ENCODE measurements at regions of chr15 and their contacts with region 1.

Region 1: GRCh38 chr15:80776420-80777045 is 2.6 kb upstream of the CEMIP start:
- DNase-seq: peak; percentile 75
- ATAC-seq: no peak
- H3K4me3 Mint-ChIP-seq: no peak overlapping the region
- H3K27ac Mint-ChIP-seq: no peak overlapping the region
- H3K4me1 Mint-ChIP-seq: peaks cover 11% of the 10 kb centered on the region
- H3K27me3 Mint-ChIP-seq: peaks cover 39% of the 10 kb centered on the region
- CTCF ChIP-seq: peak; percentile 83

Region 2: GRCh38 chr15:80384432-80384831 is 392.1 kb before region 1 on chr15:
- CTCF ChIA-PET with region 1: no interaction called
- POLR2A ChIA-PET with region 1: no interaction called
- DNase-seq: no peak
- ATAC-seq: no peak
- H3K4me3 Mint-ChIP-seq: no peak overlapping the region
- H3K27ac Mint-ChIP-seq: no peak overlapping the region
- H3K4me1 Mint-ChIP-seq: peaks cover 27% of the 10 kb centered on the region
- H3K27me3 Mint-ChIP-seq: no peaks in the 10 kb centered on the region
- CTCF ChIP-seq: no peak

Region 3: DNA sequence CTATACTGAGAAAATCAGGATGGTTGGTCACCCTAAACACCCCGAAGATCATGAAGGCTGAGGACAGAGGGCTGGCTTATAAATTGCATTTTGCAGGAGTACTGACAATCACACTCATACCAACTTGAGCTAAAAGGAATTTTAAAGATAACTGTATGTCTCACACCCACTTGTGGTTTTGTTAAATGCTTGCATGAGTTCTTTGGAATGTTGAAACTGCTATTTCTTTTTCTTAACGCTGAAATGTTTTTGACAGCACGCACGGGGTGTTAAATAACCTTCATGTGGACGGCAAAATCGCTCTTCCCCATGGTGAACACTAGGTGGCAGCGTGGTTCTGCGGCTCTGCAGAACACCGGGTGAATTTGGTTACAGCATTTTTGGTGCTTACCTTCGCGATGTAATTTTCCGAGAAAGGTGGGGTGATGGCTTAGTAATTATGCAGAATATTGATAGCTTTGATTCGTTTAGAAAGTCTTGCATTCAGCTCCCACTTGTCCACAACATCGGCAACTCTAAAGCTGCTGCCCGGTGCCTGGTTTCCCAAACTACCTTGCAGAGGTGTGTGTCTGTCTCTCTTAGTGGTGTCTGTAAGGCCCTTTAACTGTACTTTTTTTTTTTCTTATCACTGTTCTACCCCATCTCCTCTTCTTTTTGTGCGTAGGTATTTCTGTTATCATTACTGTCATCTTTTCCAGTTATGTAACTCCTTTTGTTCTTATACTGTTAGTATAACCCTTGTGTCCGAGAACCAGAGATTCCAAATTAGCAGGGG is 320.7 kb before region 1 on chr15:
- CTCF ChIA-PET with region 1: interaction called, 47 read pairs
- POLR2A ChIA-PET with region 1: no interaction called
- DNase-seq: peak; percentile 40
- ATAC-seq: peak; percentile 74
- H3K4me3 Mint-ChIP-seq: no peak overlapping the region
- H3K27ac Mint-ChIP-seq: no peak overlapping the region
- H3K4me1 Mint-ChIP-seq: peaks cover 33% of the 10 kb centered on the region
- H3K27me3 Mint-ChIP-seq: no peaks in the 10 kb centered on the region; the same call in 1 of the 2 replicates
- CTCF ChIP-seq: peak; percentile 86

Region 4: DNA sequence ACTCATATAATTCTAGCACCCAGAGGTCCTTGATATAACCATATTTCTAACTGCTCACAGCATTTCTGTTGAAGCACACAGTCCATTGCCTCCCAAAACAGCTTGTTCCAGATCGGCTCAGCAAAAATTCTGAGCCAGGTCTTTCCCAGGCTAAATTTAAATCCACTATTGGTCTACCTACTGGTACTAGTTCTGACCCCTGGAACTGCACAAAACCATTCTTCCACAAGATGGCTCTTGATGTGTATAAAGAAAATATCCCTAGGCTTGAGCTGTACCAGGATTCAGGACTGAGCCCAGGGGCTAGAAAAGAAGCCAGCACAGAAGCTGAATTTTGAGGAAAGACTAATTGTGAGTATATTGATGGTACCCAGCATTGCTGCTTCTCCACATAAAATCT is 156.9 kb before region 1 on chr15:
- CTCF ChIA-PET with region 1: interaction called, 12 read pairs
- POLR2A ChIA-PET with region 1: no interaction called
- DNase-seq: no peak
- ATAC-seq: no peak
- H3K4me3 Mint-ChIP-seq: no peak overlapping the region
- H3K27ac Mint-ChIP-seq: no peak overlapping the region
- H3K4me1 Mint-ChIP-seq: no peaks in the 10 kb centered on the region
- H3K27me3 Mint-ChIP-seq: no peaks in the 10 kb centered on the region; the same call in 1 of the 2 replicates
- CTCF ChIP-seq: no peak

Region 5: GRCh38 chr15:80674245-80674614 is 102.3 kb before region 1 on chr15:
- CTCF ChIA-PET with region 1: interaction called, 21 read pairs
- POLR2A ChIA-PET with region 1: no interaction called
- DNase-seq: no peak
- ATAC-seq: no peak
- H3K4me3 Mint-ChIP-seq: no peak overlapping the region
- H3K27ac Mint-ChIP-seq: no peak overlapping the region
- H3K4me1 Mint-ChIP-seq: peaks cover 3% of the 10 kb centered on the region; the same call in 1 of the 2 replicates
- H3K27me3 Mint-ChIP-seq: peaks cover 6% of the 10 kb centered on the region; the same call in 1 of the 2 replicates
- CTCF ChIP-seq: no peak

Region 6: GRCh38 chr15:80804965-80805495 is 28.5 kb after region 1 on chr15:
- CTCF ChIA-PET with region 1: interaction called, 11 read pairs
- POLR2A ChIA-PET with region 1: no interaction called
- DNase-seq: no peak
- ATAC-seq: peak; percentile 57
- H3K4me3 Mint-ChIP-seq: no peak overlapping the region
- H3K27ac Mint-ChIP-seq: no peak overlapping the region
- H3K4me1 Mint-ChIP-seq: peaks cover 15% of the 10 kb centered on the region
- H3K27me3 Mint-ChIP-seq: peaks cover 15% of the 10 kb centered on the region
- CTCF ChIP-seq: no peak

Region 7: GRCh38 chr15:80887148-80887547 is 110.6 kb after region 1 on chr15:
- CTCF ChIA-PET with region 1: interaction called, 15 read pairs
- POLR2A ChIA-PET with region 1: no interaction called
- DNase-seq: no peak
- ATAC-seq: peak; percentile 47
- H3K4me3 Mint-ChIP-seq: no peak overlapping the region
- H3K27ac Mint-ChIP-seq: no peak overlapping the region
- H3K4me1 Mint-ChIP-seq: peaks cover 25% of the 10 kb centered on the region
- H3K27me3 Mint-ChIP-seq: peaks cover 3% of the 10 kb centered on the region; the same call in 1 of the 2 replicates
- CTCF ChIP-seq: no peak

Region 8: DNA sequence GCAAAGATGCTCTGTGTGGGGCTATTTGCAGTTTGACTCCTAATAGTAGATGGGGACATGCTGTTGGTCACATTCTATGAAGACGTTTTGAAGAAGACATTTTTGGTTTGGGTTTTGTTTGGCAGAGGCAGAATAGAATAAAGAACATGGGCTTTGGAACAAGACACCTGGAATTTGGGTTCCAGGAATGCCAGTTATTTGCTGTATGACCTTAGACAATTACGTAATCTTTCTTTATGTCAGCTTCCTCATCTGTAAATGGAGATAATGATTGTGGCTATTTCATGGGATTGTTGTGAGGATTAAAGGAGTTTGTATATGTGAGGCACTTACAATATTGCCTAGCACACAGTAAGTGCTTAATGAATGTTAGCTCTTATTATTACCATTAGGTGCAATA is 121.5 kb after region 1 on chr15:
- CTCF ChIA-PET with region 1: no interaction called
- POLR2A ChIA-PET with region 1: no interaction called
- DNase-seq: no peak
- ATAC-seq: no peak
- H3K4me3 Mint-ChIP-seq: no peak overlapping the region
- H3K27ac Mint-ChIP-seq: no peak overlapping the region; the same call in 1 of the 2 replicates
- H3K4me1 Mint-ChIP-seq: no peaks in the 10 kb centered on the region
- H3K27me3 Mint-ChIP-seq: no peaks in the 10 kb centered on the region
- CTCF ChIP-seq: no peak

Region 9: DNA sequence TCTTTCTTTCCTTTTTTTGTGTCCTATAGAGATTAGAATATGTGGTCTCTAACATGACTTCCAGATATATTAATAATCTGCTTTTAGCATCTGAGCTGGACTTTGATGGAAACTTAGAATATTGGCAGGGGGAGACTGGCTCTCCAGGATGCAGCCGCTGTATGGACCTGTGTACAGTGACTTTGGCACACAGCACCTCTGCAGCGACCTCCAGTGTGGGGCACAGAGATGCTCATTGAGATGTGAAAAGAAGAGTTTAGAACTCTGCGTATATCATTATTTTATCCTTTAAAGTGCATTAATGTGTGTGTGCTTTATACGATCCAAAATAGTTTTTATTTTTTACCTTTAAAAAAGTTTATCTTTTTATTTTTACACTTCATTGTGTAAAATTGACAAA is 375.8 kb after region 1 on chr15:
- CTCF ChIA-PET with region 1: no interaction called
- POLR2A ChIA-PET with region 1: no interaction called
- DNase-seq: no peak
- ATAC-seq: no peak
- H3K4me3 Mint-ChIP-seq: no peak overlapping the region
- H3K27ac Mint-ChIP-seq: no peak overlapping the region
- H3K4me1 Mint-ChIP-seq: no peaks in the 10 kb centered on the region
- H3K27me3 Mint-ChIP-seq: no peaks in the 10 kb centered on the region
- CTCF ChIP-seq: no peak

Measured in WTC11 (cell line).